ENCODE measurements at regions of chr16 and their contacts with region 1.

Region 1: GRCh38 chr16:72241930-72242329 is 70.0 kb upstream of the PMFBP1 start:
- DNase-seq: peak; percentile 68
- H3K4me3 Mint-ChIP-seq: no peak overlapping the region
- H3K27ac Mint-ChIP-seq: no peak overlapping the region
- H3K4me1 Mint-ChIP-seq: peaks cover 3% of the 10 kb centered on the region
- H3K27me3 Mint-ChIP-seq: no peaks in the 10 kb centered on the region
- CTCF ChIP-seq: peak; percentile 76

Region 2: GRCh38 chr16:71840012-71840411 is 401.9 kb before region 1 on chr16:
- CTCF ChIA-PET with region 1: no interaction called
- POLR2A ChIA-PET with region 1: no interaction called
- intact Hi-C with region 1: no loop called
- DNase-seq: no peak
- H3K4me3 Mint-ChIP-seq: no peak overlapping the region
- H3K27ac Mint-ChIP-seq: no peak overlapping the region
- H3K4me1 Mint-ChIP-seq: peaks cover 2% of the 10 kb centered on the region
- H3K27me3 Mint-ChIP-seq: no peaks in the 10 kb centered on the region
- CTCF ChIP-seq: no peak

Region 3: GRCh38 chr16:72182976-72183375 is 59.0 kb before region 1 on chr16:
- CTCF ChIA-PET with region 1: no interaction called
- POLR2A ChIA-PET with region 1: no interaction called
- intact Hi-C with region 1: no loop called
- DNase-seq: no peak
- H3K4me3 Mint-ChIP-seq: no peak overlapping the region
- H3K27ac Mint-ChIP-seq: no peak overlapping the region
- H3K4me1 Mint-ChIP-seq: no peaks in the 10 kb centered on the region
- H3K27me3 Mint-ChIP-seq: no peaks in the 10 kb centered on the region
- CTCF ChIP-seq: no peak

Region 4: DNA sequence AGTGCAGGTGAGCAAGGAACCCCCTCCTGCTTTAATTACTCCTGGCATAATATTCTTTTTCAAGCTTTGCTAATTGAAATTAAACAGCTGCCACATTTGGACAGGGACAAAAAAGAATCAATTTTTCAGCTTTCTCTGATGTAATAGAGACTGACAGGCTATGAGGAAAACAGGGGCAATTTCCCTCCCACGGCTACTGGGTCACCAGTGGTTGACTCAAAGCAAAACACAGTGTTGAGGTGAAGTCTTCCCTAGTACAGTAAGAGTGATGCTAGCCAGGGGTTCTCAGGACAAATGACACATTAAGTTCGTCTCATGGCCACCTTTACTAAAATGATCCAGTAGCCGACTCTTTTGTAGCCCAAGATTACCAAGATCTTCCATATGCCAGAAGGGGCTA is 31.4 kb before region 1 on chr16:
- CTCF ChIA-PET with region 1: no interaction called
- POLR2A ChIA-PET with region 1: no interaction called
- intact Hi-C with region 1: no loop called
- DNase-seq: no peak
- H3K4me3 Mint-ChIP-seq: no peak overlapping the region
- H3K27ac Mint-ChIP-seq: no peak overlapping the region
- H3K4me1 Mint-ChIP-seq: no peaks in the 10 kb centered on the region
- H3K27me3 Mint-ChIP-seq: no peaks in the 10 kb centered on the region
- CTCF ChIP-seq: no peak

Region 5: GRCh38 chr16:72664509-72665225 is 422.7 kb after region 1 on chr16:
- CTCF ChIA-PET with region 1: no interaction called
- POLR2A ChIA-PET with region 1: interaction called, 3 read pairs
- intact Hi-C with region 1: loop called (anchors 10 kb)
- DNase-seq: peak; percentile 99
- H3K4me3 Mint-ChIP-seq: peak overlapping the region; percentile 99
- H3K27ac Mint-ChIP-seq: peak overlapping the region; percentile 96
- H3K4me1 Mint-ChIP-seq: no peaks in the 10 kb centered on the region
- H3K27me3 Mint-ChIP-seq: no peaks in the 10 kb centered on the region
- CTCF ChIP-seq: no peak

Region 6: GRCh38 chr16:72876221-72876620 is 634.3 kb after region 1 on chr16:
- CTCF ChIA-PET with region 1: no interaction called
- POLR2A ChIA-PET with region 1: no interaction called
- intact Hi-C with region 1: loop called (anchors 5 kb)
- DNase-seq: peak; percentile 77
- H3K4me3 Mint-ChIP-seq: peak overlapping the region; percentile 38
- H3K27ac Mint-ChIP-seq: peak overlapping the region; percentile 93
- H3K4me1 Mint-ChIP-seq: peaks cover 31% of the 10 kb centered on the region
- H3K27me3 Mint-ChIP-seq: no peaks in the 10 kb centered on the region
- CTCF ChIP-seq: no peak

Measured in MCF 10A (cell line).